Activated B cell treated with CpG ODN at 0.5 μM for 24 hours (primary cell): ENCODE measurements at regions of chr10 and their contacts with region 1.

Region 1: DNA sequence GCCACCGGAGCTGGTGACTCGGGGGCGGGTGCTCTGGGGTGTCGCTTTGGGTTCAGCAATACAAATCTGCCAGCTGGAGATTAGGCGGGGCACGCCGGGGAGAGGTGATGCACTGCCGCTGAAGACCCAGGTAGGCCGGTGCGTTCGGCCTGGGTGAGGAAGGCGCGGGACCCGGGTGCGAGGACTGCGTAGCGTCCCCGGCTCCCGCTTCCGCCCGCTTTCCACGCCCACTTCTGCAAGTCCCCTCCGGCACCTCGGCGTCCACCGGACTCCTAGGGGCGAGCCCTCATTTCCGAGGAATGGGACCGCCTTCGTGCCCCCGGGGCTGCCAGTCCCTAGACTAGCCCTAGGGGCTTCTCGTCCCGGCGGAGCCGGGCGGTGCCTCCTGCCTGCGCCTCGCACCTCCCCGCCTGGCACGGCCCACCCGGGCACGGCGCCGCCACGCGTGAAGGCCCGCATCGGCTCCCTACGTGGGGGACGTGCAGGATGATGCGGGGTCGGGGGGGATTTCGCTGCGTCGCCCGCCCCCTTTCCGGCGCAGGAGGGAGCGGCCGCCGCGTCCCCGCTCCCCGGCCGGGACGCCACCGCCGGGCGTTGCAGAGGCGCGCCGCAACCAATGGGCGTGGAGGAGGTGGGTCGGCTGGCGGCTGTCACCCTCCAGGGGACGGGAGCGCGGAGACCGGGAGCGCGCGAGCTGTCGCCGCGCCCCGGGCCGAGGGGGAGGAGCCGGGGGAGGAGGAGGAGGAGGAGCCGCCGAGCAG is 40.0 kb downstream of the HK1 start:
- DNase-seq: peak; percentile 87
- ATAC-seq: peak; percentile 93
- H3K4me3 Mint-ChIP-seq: peak overlapping the region; percentile 92
- H3K27ac Mint-ChIP-seq: peak overlapping the region; percentile 82
- H3K4me1 Mint-ChIP-seq: peaks cover 40% of the 10 kb centered on the region
- H3K27me3 Mint-ChIP-seq: no peaks in the 10 kb centered on the region
- CTCF ChIP-seq: no peak

Region 2: DNA sequence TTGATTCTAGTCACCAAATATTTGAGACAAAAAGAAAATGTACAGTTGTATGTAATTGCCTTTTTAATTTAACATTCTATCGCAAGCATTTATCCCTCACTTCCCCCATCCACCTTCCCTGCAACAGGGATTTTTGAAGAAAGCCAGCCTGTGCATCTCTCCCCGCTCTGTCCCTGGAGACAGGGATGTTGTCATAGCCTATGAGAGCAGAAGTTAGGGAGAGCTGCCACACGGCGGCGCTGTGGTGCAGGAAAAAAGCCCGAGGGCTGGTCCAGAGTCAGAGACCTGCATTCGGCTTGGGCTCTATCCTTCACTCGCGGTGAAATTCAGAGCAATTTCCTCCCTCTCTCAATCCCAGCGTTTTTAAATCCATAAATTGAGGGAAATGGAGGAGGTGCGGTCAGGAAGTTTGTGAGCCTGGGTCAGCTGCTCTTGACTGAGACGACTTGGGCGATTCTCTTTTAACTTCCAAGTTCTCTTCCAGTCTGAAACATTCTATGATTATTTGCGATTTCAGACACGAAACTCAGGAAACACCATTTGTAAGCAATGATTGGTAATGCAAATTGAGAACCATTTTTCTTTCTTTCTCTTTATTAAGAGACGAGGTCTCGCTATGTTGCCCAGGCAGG is 80.6 kb before region 1 on chr10:
- CTCF ChIA-PET with region 1: no interaction called
- POLR2A ChIA-PET with region 1: no interaction called
- intact Hi-C with region 1: loop called (anchors 2 kb)
- DNase-seq: peak; percentile 79
- ATAC-seq: peak; percentile 98
- H3K4me3 Mint-ChIP-seq: no peak overlapping the region
- H3K27ac Mint-ChIP-seq: no peak overlapping the region
- H3K4me1 Mint-ChIP-seq: peaks cover 3% of the 10 kb centered on the region
- H3K27me3 Mint-ChIP-seq: no peaks in the 10 kb centered on the region
- CTCF ChIP-seq: peak; percentile 67

Region 3: GRCh38 chr10:69348816-69349541 is 30.7 kb after region 1 on chr10:
- CTCF ChIA-PET with region 1: interaction called, 3 read pairs
- POLR2A ChIA-PET with region 1: interaction called, 18 read pairs
- intact Hi-C with region 1: loop called (anchors 1 kb)
- DNase-seq: no peak
- ATAC-seq: peak; percentile 28
- H3K4me3 Mint-ChIP-seq: peak overlapping the region; percentile 62
- H3K27ac Mint-ChIP-seq: peak overlapping the region; percentile 81
- H3K4me1 Mint-ChIP-seq: peaks cover 63% of the 10 kb centered on the region
- H3K27me3 Mint-ChIP-seq: no peaks in the 10 kb centered on the region
- CTCF ChIP-seq: no peak

Region 4: GRCh38 chr10:69392481-69393000 is 74.3 kb after region 1 on chr10:
- CTCF ChIA-PET with region 1: interaction called, 8 read pairs
- POLR2A ChIA-PET with region 1: no interaction called
- intact Hi-C with region 1: loop called (anchors 1 kb)
- DNase-seq: peak; percentile 62
- ATAC-seq: peak; percentile 99
- H3K4me3 Mint-ChIP-seq: no peak overlapping the region
- H3K27ac Mint-ChIP-seq: no peak overlapping the region
- H3K4me1 Mint-ChIP-seq: peaks cover 16% of the 10 kb centered on the region
- H3K27me3 Mint-ChIP-seq: no peaks in the 10 kb centered on the region
- CTCF ChIP-seq: peak; percentile 94

Region 5: GRCh38 chr10:70169649-70170364 is 851.5 kb after region 1 on chr10:
- CTCF ChIA-PET with region 1: no interaction called
- POLR2A ChIA-PET with region 1: no interaction called
- intact Hi-C with region 1: loop called (anchors 5 kb)
- DNase-seq: no peak
- ATAC-seq: peak; percentile 29
- H3K4me3 Mint-ChIP-seq: peak overlapping the region; percentile 94
- H3K27ac Mint-ChIP-seq: peak overlapping the region; percentile 93
- H3K4me1 Mint-ChIP-seq: peaks cover 43% of the 10 kb centered on the region
- H3K27me3 Mint-ChIP-seq: no peaks in the 10 kb centered on the region
- CTCF ChIP-seq: no peak